ENCODE measurements at regions of chr6 and their contacts with region 1.

Region 1: GRCh38 chr6:53426667-53427270 is 78.0 kb upstream of the ELOVL5 start:
- DNase-seq: no peak
- H3K4me3 Mint-ChIP-seq: no peak overlapping the region
- H3K27ac Mint-ChIP-seq: no peak overlapping the region
- H3K4me1 Mint-ChIP-seq: peaks cover 27% of the 10 kb centered on the region
- H3K27me3 Mint-ChIP-seq: peaks cover 18% of the 10 kb centered on the region

Region 2: GRCh38 chr6:53437557-53438202 is 10.9 kb after region 1 on chr6:
- intact Hi-C with region 1: loop called (anchors 2 kb)
- DNase-seq: no peak
- H3K4me3 Mint-ChIP-seq: no peak overlapping the region
- H3K27ac Mint-ChIP-seq: no peak overlapping the region
- H3K4me1 Mint-ChIP-seq: peaks cover 17% of the 10 kb centered on the region
- H3K27me3 Mint-ChIP-seq: peaks cover 3% of the 10 kb centered on the region

Measured in activated T-helper 2 cell treated with anti-CD3 and anti-CD28 coated beads, Interferon-gamma antibody, Interleukin-2, Interleukin-4, amounts not matched to agents 10 μg/mL and 5 μg/mL and 100 μg/mL, durations not matched to agents 14 hours and 24 hours and 36 hours (primary cell).